CD4-positive, alpha-beta memory T cell (primary cell): ENCODE measurements at regions of chr1 and their contacts with region 1.

Region 1: GRCh38 chr1:70134148-70134547 is 71.2 kb downstream of the LRRC40 start:
- DNase-seq: no peak
- H3K4me3 ChIP-seq: no peak overlapping the region
- H3K4me3 Mint-ChIP-seq: no peak overlapping the region
- H3K27ac ChIP-seq: no peak overlapping the region
- H3K27ac Mint-ChIP-seq: no peak overlapping the region
- H3K4me1 ChIP-seq: no peaks in the 10 kb centered on the region
- H3K4me1 Mint-ChIP-seq: peaks cover 0 to 1% (median 0%) of the 10 kb centered on the region in 4 donors
- H3K27me3 ChIP-seq: no peaks in the 10 kb centered on the region
- H3K27me3 Mint-ChIP-seq: peaks cover 3% of the 10 kb centered on the region in 2 donors

Region 2: GRCh38 chr1:70487910-70488665 is 353.9 kb after region 1 on chr1:
- CTCF ChIA-PET with region 1: interaction called, 5 read pairs
- POLR2A ChIA-PET with region 1: no interaction called
- intact Hi-C with region 1: loop called (anchors 1 kb)
- DNase-seq: peak in 2 of 5 donors; percentile 4 to 19
- H3K4me3 ChIP-seq: no peak overlapping the region
- H3K4me3 Mint-ChIP-seq: no peak overlapping the region
- H3K27ac ChIP-seq: no peak overlapping the region
- H3K27ac Mint-ChIP-seq: no peak overlapping the region
- H3K4me1 ChIP-seq: no peaks in the 10 kb centered on the region
- H3K4me1 Mint-ChIP-seq: no peaks in the 10 kb centered on the region
- H3K27me3 ChIP-seq: no peaks in the 10 kb centered on the region
- H3K27me3 Mint-ChIP-seq: peaks cover 3 to 5% of the 10 kb centered on the region in 2 donors

Region 3: GRCh38 chr1:70509996-70510876 is 376.1 kb after region 1 on chr1:
- CTCF ChIA-PET with region 1: interaction called, 12 read pairs
- POLR2A ChIA-PET with region 1: no interaction called
- intact Hi-C with region 1: loop called (anchors 1 kb)
- DNase-seq: peak in 4 of 5 donors; percentile 25 to 49 (median 32)
- H3K4me3 ChIP-seq: no peak overlapping the region
- H3K4me3 Mint-ChIP-seq: no peak overlapping the region
- H3K27ac ChIP-seq: no peak overlapping the region
- H3K27ac Mint-ChIP-seq: no peak overlapping the region
- H3K4me1 ChIP-seq: no peaks in the 10 kb centered on the region
- H3K4me1 Mint-ChIP-seq: no peaks in the 10 kb centered on the region
- H3K27me3 ChIP-seq: no peaks in the 10 kb centered on the region
- H3K27me3 Mint-ChIP-seq: peaks cover 5 to 7% of the 10 kb centered on the region in 2 donors

Region 4: GRCh38 chr1:71049951-71050598 is 915.9 kb after region 1 on chr1:
- CTCF ChIA-PET with region 1: no interaction called
- POLR2A ChIA-PET with region 1: no interaction called
- intact Hi-C with region 1: loop called (anchors 1 kb)
- DNase-seq: peak in 4 of 5 donors; percentile 32 to 46 (median 42)
- H3K4me3 ChIP-seq: no peak overlapping the region
- H3K4me3 Mint-ChIP-seq: peak overlapping the region in 1 of 8 donors; percentile 7
- H3K27ac ChIP-seq: no peak overlapping the region
- H3K27ac Mint-ChIP-seq: no peak overlapping the region
- H3K4me1 ChIP-seq: peaks cover 17% of the 10 kb centered on the region
- H3K4me1 Mint-ChIP-seq: peaks cover 12 to 23% (median 19%) of the 10 kb centered on the region in 4 donors
- H3K27me3 ChIP-seq: peaks cover 30% of the 10 kb centered on the region
- H3K27me3 Mint-ChIP-seq: peaks cover 23 to 33% of the 10 kb centered on the region in 2 donors